Activated B cell treated with CpG ODN at 0.5 μM for 24 hours (primary cell): ENCODE measurements at regions of chr2 and their contacts with region 1.

Region 1: DNA sequence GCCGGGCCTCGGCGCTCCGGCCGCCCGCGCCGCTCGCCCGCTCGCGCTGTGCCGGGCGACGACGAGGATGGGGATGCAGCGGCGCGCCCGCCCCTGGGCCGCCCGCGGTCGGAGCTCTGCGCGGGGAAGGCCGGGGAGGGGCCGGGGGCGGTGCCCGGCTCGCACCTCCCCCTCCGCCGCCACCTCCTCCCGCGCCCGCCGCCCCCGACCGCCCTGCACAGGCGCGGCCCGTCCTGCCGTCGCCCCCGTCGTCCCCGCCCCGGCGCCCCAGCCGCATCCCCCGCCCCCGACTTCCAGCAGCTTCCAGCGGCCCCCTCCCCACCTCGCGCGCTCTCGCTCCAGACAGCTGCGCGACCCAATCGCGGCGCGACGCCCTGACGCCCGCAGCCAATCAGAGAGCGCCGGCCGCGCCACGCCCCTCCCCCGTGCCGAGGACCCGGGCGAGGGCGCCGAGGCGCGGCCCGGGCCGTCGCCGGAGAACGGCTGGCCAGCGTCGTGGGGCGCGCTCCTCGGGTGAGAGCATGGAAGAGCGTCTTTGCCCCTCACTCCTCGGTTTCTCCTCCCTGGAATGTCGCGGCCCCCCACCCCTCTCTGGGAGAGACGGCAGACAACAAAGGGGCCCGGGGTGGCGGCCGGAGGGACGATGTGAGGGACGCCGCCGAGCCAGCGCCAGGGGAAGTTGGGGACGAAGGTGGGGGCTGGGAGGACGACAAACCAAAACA is at the start of gene MBOAT2:
- DNase-seq: peak; percentile 79
- ATAC-seq: peak; percentile 90
- H3K4me3 Mint-ChIP-seq: peak within 1 kb of the TSS; percentile 82
- H3K27ac Mint-ChIP-seq: peak within 1 kb of the TSS; percentile 37
- H3K4me1 Mint-ChIP-seq: peaks cover 11% of the 10 kb centered on the region
- H3K27me3 Mint-ChIP-seq: peaks cover 4% of the 10 kb centered on the region
- CTCF ChIP-seq: no peak
- total RNA-seq, gene MBOAT2: 0.69 and 1.7 TPM in 2 replicates

Region 2: DNA sequence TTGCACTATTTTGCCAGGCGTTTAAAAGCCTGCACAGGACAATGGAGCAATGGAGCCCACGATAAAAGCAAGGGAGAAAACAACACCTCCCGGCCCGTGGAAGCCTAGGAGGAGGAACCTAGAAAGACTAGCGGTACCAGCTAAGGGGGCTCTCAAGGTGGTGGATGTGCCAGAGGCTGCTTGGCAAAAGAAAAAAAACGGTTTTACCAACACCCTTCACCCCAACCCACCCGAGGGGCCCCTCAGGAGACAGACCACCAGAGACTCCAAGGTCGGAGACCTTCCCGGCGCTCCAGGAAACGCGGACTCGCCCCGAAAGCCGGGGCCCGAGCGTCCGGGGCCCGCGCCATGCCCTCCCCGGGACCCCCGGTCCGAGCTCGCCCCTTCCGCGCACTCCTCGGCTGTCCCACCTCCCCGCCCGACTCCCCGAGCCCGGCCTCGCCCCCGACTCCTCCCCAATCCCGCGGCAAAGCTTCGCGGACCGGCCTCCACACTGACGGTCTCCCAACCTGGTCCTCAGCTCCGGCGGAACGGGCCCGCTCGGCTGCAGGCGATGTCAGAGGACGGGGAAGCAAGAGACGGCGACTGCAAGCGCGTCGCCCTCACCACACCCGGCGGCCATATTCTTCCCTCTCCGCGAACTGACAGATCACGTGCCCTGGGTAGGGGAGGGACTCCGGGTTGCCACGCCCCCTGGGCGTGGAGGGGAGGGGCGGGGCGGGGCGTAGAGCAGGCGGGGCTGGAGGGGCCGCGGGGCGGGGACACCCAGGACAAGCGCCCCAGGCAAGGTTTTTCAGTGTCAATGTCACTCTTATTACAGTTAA is 166.6 kb before region 1 on chr2 and contains the start of gene KIDINS220:
- CTCF ChIA-PET with region 1: no interaction called
- POLR2A ChIA-PET with region 1: no interaction called
- intact Hi-C with region 1: loop called (anchors 2 kb)
- DNase-seq: peak; percentile 74
- ATAC-seq: peak; percentile 96
- H3K4me3 Mint-ChIP-seq: peak within 1 kb of the TSS; percentile 98
- H3K27ac Mint-ChIP-seq: peak within 1 kb of the TSS; percentile 96
- H3K4me1 Mint-ChIP-seq: peaks cover 40% of the 10 kb centered on the region
- H3K27me3 Mint-ChIP-seq: peaks cover 6% of the 10 kb centered on the region
- CTCF ChIP-seq: no peak
- total RNA-seq, gene KIDINS220: 26.4 and 26.9 TPM in 2 replicates

Region 3: DNA sequence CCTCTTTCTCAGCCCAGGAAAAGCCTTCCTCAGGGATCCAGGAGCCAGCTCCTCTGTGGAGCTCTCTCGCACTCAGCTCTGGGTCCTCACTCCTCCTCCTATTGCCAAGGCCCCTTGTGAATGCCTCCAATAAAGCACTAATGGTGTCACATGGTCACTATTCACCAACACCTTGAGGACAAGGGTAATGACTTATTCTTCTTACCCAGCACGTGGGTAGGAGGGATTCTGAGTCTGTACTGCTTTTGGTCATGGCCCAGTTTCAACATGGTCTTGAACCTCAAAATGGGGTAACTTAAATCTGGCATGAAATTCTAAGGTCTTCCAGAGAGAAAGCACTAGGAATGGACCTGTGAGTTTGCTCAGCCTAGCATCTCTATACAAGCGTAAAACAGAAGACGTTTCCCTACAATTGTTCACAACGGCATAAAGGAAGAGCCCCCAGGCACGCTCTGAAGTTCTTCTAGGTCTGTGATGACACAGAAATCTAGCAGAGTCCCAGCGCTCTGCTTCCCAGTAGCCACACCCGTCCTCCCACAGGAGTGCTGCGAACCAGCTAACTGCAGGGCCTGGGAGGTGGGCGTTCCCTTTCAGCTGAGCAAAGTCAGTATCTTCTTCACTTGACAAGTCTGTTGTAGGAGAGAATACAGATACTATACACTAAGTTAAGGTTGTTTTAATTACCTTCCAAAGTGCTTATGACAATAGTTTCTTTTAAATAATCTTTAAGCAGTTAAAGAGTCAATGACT is 151.8 kb before region 1 on chr2:
- CTCF ChIA-PET with region 1: no interaction called
- POLR2A ChIA-PET with region 1: no interaction called
- intact Hi-C with region 1: no loop called
- DNase-seq: no peak
- ATAC-seq: no peak
- H3K4me3 Mint-ChIP-seq: no peak overlapping the region
- H3K27ac Mint-ChIP-seq: no peak overlapping the region
- H3K4me1 Mint-ChIP-seq: no peaks in the 10 kb centered on the region
- H3K27me3 Mint-ChIP-seq: no peaks in the 10 kb centered on the region
- CTCF ChIP-seq: no peak

Region 4: DNA sequence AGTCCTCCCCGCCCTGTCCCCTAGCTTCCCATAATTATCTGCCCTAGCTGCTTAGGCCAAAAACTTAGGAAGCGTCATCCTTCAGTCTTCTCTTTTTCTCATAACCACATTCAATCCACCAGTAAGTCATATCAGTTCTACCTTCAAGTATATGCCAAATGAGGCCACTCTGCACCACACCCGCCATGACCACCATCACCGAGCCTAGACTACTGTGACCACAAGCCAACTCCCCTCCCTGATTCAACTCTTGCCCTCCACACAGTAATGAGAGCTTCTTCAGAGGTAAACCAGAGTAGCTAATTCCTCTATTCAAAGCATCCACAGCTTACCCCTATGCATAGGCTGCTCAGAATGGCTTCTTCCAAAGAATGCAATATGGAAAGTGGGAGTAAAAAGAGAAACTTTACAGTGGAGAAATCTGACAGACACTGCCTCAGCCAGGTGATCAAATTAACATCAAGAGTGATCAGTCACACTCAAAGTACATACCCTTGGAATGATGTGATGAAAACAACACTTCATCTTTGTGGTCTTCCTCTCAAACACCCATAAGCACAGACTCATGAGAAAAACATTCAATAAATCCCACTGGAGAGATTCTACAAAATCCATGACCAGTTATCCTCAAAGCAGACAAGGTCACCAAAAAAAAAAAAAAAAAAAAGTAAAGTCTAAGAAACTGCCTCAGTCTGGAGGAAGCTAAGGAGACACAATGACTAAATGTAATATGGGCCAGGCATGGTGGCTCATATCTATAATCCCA is 18.0 kb before region 1 on chr2:
- CTCF ChIA-PET with region 1: no interaction called
- POLR2A ChIA-PET with region 1: interaction called, 5 read pairs
- intact Hi-C with region 1: loop called (anchors 2 kb)
- DNase-seq: no peak
- ATAC-seq: no peak
- H3K4me3 Mint-ChIP-seq: no peak overlapping the region
- H3K27ac Mint-ChIP-seq: no peak overlapping the region
- H3K4me1 Mint-ChIP-seq: peaks cover 19% of the 10 kb centered on the region
- H3K27me3 Mint-ChIP-seq: no peaks in the 10 kb centered on the region
- CTCF ChIP-seq: no peak